ENCODE measurements at regions of chr7 and their contacts with region 1.

Region 1: GRCh38 chr7:149838224-149838947 is at the start of gene ZNF862:
- DNase-seq: peak; percentile 100

Region 2: DNA sequence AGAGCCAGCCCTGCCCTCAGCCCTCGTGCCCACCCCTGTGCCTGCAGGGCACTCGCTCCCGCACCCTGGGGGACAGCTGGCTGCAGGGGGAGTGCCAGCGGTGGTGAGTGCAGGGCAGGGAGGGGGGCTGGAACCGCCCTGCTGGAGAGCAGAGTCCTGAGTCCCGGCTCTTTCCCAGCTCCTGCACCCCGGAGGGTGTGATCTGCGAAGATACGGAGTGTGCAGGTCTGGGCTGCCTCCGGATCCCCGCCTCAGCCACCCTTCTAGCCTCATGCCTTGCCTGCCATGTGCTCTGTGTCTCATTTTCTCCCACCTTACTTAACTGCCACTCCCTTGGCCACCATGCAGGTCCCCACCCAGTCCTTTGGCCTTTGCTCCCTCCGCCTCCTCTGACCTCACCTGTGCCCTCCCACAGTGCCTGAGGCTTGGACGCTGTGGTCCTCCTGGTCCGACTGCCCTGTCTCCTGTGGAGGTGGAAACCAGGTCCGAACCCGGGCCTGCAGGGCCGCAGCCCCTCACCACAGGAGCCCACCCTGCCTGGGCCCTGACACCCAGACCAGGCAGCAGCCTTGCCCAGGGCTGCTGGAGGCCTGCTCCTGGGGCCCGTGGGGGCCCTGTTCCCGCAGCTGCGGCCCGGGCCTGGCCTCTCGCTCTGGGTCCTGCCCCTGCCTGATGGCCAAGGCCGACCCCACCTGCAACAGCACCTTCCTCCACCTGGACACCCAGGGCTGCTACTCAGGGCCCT is 16.8 kb before region 1 on chr7:
- CTCF ChIA-PET with region 1: no interaction called
- POLR2A ChIA-PET with region 1: interaction called, 10 read pairs
- DNase-seq: no peak

Region 3: DNA sequence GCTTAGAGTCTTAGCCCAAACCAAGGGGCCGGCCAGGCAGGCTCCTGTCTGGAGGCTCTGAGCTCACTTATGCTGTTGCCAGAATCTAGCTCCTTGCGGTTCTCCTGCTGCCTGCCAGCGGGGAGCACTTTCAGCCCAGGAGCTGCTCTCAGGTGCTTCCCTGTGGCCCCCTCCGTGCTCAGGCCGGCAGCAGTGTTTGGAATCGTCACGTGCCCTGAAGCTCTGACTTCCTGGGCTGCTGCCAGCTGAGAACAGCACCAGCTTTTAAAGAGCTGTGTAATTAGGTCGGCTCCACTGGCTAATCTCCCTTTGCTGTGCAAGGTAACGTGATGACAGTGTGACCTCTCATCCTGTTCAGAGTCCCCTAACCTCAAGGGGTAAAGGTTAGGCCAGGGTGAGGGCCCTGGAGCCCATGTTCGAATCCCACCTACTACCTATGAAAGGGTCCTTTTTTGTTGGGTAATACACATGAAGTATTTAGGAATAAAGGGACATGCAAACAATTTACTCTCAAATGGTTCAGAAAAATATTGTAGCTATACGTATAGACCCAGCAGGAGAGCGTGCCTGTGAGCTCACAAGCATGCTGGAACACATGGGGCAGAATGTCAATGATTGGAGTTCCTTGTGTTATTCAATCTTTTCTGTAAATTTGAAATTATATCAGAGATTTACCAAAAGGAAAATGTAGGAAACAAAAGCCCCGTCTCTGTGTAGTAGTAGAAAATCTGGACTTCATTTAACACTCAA is 16.4 kb after region 1 on chr7:
- CTCF ChIA-PET with region 1: interaction called, 10 read pairs
- POLR2A ChIA-PET with region 1: interaction called, 39 read pairs
- DNase-seq: peak; percentile 69

Region 4: DNA sequence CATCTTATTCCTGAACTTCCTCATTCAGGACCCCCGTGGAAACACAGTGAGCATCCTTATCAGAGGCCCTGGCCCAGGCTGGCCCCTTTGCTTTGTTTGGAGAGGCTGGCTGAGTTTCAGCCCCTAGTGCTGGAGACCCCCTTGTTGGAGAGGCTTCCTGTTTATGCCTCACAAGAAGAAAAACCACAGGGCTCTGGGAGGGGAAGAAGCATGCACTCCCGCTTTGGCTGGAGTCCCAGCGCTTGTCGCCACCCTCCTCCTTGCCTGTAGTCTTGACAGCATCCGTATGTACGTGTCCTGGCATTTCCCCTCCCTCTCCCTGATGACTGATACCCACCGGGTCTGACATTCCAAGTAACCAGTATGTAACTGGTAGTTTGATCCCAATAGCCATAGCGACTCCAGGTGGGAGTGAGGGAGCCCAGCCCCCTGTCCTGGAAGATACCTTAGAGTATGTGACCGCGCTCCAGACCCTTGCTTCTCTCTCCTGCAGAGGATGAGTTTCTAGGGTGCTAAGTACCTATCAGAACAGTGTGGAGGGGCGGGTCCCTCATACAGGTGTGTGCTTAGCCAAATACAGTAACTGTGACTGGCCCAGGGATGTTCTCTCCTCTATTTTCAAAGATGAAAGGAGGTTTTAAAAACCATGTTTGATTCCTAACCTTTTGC is 28.5 kb after region 1 on chr7:
- CTCF ChIA-PET with region 1: no interaction called
- POLR2A ChIA-PET with region 1: interaction called, 17 read pairs
- DNase-seq: no peak

Measured in HEK293T (cell line).